Posterior vena cava (tissue), 2 donors: ENCODE measurements at regions of chr2 and their contacts with region 1.

Region 1: GRCh38 chr2:23009545-23010149 is 375.3 kb upstream of the KLHL29 start:
- DNase-seq: no peak

Region 2: GRCh38 chr2:21135585-21135984 is 1874.1 kb before region 1 on chr2:
- intact Hi-C with region 1: loop called in 1 of 2 experiments (anchors 5 kb)
- DNase-seq: no peak

Region 3: GRCh38 chr2:23077596-23077995 is 67.9 kb after region 1 on chr2:
- intact Hi-C with region 1: no loop called
- DNase-seq: no peak